Right cardiac atrium (tissue), 5 donors: ENCODE measurements at regions of chr3 and their contacts with region 1.

Region 1: GRCh38 chr3:73848173-73848906 is 223.6 kb upstream of the PDZRN3 start:
- DNase-seq: no peak
- ATAC-seq: peak in 1 of 2 donors; percentile 47
- H3K4me3 ChIP-seq: no peak overlapping the region
- H3K27ac ChIP-seq: no peak overlapping the region
- H3K4me1 ChIP-seq: no peaks in the 10 kb centered on the region
- H3K27me3 ChIP-seq: no peaks in the 10 kb centered on the region

Region 2: DNA sequence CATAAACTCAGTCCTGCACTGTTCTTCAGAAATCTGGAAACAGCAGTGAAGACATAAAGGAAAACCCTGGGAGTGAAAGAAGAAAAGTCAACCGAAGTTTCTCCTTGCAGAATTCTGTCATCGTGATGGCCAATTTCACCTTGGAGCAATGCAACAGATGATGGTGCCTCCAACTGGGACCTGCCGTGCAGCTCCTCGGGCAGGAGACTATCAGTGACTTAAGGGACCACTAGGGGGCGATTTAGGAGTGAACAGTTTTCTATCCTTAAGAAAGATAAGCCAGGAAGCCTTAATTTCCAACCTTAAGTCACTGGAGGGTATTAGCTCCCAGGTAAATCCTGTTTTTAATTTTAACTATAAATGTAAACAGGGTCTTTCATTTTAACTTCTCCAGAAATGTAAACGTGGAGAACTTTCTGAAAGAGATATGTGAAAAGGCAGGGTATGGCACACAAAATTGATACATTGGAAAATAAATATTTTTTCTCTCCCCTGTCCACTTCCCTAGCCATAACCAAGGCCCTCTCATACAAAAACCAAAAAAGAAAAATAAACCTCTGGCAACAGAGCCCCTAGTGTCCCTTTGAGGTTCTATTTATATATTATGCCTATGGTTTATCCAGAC is 339.9 kb before region 1 on chr3:
- intact Hi-C with region 1: loop called in 3 of 4 experiments (anchors 5 to 10 kb)
- DNase-seq: peak in 1 of 3 donors; percentile 62
- ATAC-seq: peak; percentile 61 to 73
- H3K4me3 ChIP-seq: no peak overlapping the region
- H3K27ac ChIP-seq: no peak overlapping the region
- H3K4me1 ChIP-seq: peaks cover 3% of the 10 kb centered on the region
- H3K27me3 ChIP-seq: no peaks in the 10 kb centered on the region

Region 3: GRCh38 chr3:73745526-73746191 is 102.7 kb before region 1 on chr3:
- intact Hi-C with region 1: no loop called
- DNase-seq: no peak
- ATAC-seq: no peak
- H3K4me3 ChIP-seq: no peak overlapping the region
- H3K27ac ChIP-seq: no peak overlapping the region
- H3K4me1 ChIP-seq: no peaks in the 10 kb centered on the region
- H3K27me3 ChIP-seq: no peaks in the 10 kb centered on the region